ENCODE measurements at regions of chr1 and their contacts with region 1.

Region 1: GRCh38 chr1:213122514-213122929 is 71.5 kb downstream of the RPS6KC1 start:
- DNase-seq: peak; percentile 70
- H3K4me3 ChIP-seq: no peak overlapping the region
- H3K27ac ChIP-seq: no peak overlapping the region
- H3K4me1 ChIP-seq: peaks cover 40% of the 10 kb centered on the region
- H3K27me3 ChIP-seq: no peaks in the 10 kb centered on the region

Region 2: GRCh38 chr1:214116258-214116657 is 993.7 kb after region 1 on chr1:
- in situ Hi-C with region 1: loop called (anchors 10 kb)
- DNase-seq: no peak
- H3K4me3 ChIP-seq: no peak overlapping the region
- H3K27ac ChIP-seq: no peak overlapping the region
- H3K4me1 ChIP-seq: no peaks in the 10 kb centered on the region
- H3K27me3 ChIP-seq: 0 out of 2 replicates have a peak, but pooled peaks cover 6% of the 10 kb centered on the region